ENCODE measurements at regions of chr3 and their contacts with region 1.

Region 1: GRCh38 chr3:32420126-32421038 is 28.7 kb downstream of the CMTM7 start:
- DNase-seq: peak; percentile 51
- ATAC-seq: peak; percentile 81
- H3K4me3 Mint-ChIP-seq: peak overlapping the region; percentile 76
- H3K27ac Mint-ChIP-seq: peak overlapping the region; percentile 88
- H3K4me1 Mint-ChIP-seq: peaks cover 91% of the 10 kb centered on the region
- H3K27me3 Mint-ChIP-seq: no peaks in the 10 kb centered on the region
- CTCF ChIP-seq: no peak

Region 2: GRCh38 chr3:32391643-32392535 is 28.5 kb before region 1 on chr3 and contains the start of gene CMTM7:
- CTCF ChIA-PET with region 1: interaction called, 3 read pairs
- POLR2A ChIA-PET with region 1: interaction called, 10 read pairs
- intact Hi-C with region 1: no loop called
- DNase-seq: peak; percentile 65
- ATAC-seq: peak; percentile 64
- H3K4me3 Mint-ChIP-seq: peak within 1 kb of the TSS; percentile 97
- H3K27ac Mint-ChIP-seq: peak within 1 kb of the TSS; percentile 90
- H3K4me1 Mint-ChIP-seq: peaks cover 56% of the 10 kb centered on the region
- H3K27me3 Mint-ChIP-seq: no peaks in the 10 kb centered on the region
- CTCF ChIP-seq: no peak
- total RNA-seq, gene CMTM7: 70.5 and 82.1 TPM in 2 replicates

Region 3: DNA sequence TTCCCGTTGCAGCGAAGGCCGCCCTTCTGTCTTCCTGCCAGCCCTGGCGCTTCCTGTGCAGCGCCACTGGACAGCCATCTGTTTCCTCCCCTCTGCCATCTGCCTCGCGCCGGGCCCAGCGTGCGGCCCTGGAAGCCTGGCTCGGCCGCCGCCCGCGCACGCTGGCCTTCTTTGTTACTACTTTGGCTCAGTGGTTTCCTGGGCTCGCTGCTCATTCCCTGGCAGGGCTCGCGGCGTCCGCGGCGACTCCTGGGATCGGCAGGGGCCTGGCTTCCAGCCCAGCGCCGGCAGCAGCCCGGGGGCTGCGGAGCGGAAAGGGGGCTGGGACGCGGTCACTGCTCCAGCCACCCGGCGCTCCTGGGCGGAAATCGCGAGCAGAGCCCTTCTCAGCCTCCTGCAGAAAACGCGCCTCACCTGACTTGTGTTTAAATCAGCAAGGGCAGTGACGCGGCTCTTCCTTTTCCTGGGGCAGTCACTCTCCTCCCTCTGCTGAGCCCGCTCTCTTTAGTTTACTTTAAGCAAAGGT is 18.8 kb before region 1 on chr3:
- CTCF ChIA-PET with region 1: interaction called, 4 read pairs
- POLR2A ChIA-PET with region 1: interaction called, 6 read pairs
- intact Hi-C with region 1: loop called (anchors 1 kb)
- DNase-seq: peak; percentile 45
- ATAC-seq: peak; percentile 71
- H3K4me3 Mint-ChIP-seq: peak overlapping the region; percentile 89
- H3K27ac Mint-ChIP-seq: peak overlapping the region; percentile 97
- H3K4me1 Mint-ChIP-seq: peaks cover 86% of the 10 kb centered on the region
- H3K27me3 Mint-ChIP-seq: no peaks in the 10 kb centered on the region
- CTCF ChIP-seq: no peak

Region 4: DNA sequence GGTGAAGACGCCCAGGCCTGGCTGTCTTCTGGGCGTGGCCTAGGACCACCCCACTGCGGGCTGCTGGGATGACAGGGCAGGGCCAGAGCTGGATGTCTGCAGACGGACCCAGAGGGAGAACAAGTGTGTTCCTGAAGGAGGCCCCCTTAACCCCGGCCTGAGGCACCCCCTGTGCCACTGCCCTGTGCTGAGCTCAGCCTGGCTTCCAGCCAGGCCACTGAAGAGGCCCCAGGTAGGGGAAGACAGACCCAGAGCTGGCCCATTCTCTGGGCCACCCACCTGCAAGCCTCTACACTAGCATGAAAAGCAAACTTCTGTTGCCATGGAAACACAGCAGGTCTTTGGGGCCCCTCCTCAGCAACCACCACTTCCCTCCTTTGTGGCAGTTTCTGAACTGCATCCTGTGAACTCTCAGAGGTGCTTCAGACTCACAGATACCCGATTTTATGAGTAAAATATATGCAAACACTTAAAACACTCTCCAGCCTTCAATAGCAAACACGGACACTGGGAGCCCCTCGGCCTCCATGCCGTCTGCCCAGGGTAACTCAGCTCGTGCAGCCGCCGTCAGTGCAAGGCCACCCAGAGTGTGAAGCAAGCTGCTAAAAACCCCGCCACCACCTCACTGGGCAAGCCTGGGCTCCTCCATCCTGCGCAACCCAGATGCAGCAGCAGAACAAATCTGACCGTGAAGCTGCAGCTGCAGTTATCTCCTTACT is 39.8 kb after region 1 on chr3:
- CTCF ChIA-PET with region 1: interaction called, 8 read pairs
- POLR2A ChIA-PET with region 1: interaction called, 60 read pairs
- intact Hi-C with region 1: loop called (anchors 1 kb)
- DNase-seq: peak; percentile 61
- ATAC-seq: peak; percentile 72
- H3K4me3 Mint-ChIP-seq: peak overlapping the region; percentile 74
- H3K27ac Mint-ChIP-seq: no peak overlapping the region
- H3K4me1 Mint-ChIP-seq: peaks cover 55% of the 10 kb centered on the region
- H3K27me3 Mint-ChIP-seq: no peaks in the 10 kb centered on the region
- CTCF ChIP-seq: no peak

Region 5: DNA sequence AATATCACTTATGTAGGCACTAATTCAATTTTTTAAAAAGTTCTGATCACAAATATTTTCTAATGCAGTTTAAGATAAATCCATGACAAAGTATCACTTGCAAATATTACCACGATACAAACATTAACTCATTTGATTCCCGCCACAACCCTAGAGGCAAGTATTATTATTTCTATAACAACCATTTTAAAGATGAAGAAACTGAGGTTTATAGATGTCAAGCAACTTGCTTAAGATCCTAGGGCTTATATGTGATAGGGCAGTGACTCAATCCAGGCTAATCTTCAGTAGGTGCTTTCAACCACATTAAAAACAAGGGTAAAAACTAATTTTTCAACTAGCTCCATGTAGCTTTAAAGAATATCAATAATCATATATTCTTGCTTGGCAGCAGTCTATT is 148.6 kb after region 1 on chr3:
- CTCF ChIA-PET with region 1: no interaction called
- POLR2A ChIA-PET with region 1: no interaction called
- intact Hi-C with region 1: no loop called
- DNase-seq: no peak
- ATAC-seq: no peak
- H3K4me3 Mint-ChIP-seq: peak overlapping the region; percentile 94
- H3K27ac Mint-ChIP-seq: no peak overlapping the region
- H3K4me1 Mint-ChIP-seq: peaks cover 36% of the 10 kb centered on the region
- H3K27me3 Mint-ChIP-seq: no peaks in the 10 kb centered on the region
- CTCF ChIP-seq: no peak

Region 6: GRCh38 chr3:33482111-33482521 is 1061.7 kb after region 1 on chr3:
- CTCF ChIA-PET with region 1: no interaction called
- POLR2A ChIA-PET with region 1: no interaction called
- intact Hi-C with region 1: no loop called
- DNase-seq: no peak
- ATAC-seq: no peak
- H3K4me3 Mint-ChIP-seq: no peak overlapping the region
- H3K27ac Mint-ChIP-seq: no peak overlapping the region
- H3K4me1 Mint-ChIP-seq: no peaks in the 10 kb centered on the region
- H3K27me3 Mint-ChIP-seq: no peaks in the 10 kb centered on the region
- CTCF ChIP-seq: no peak